Activated CD8-positive, alpha-beta T cell treated with anti-CD3 and anti-CD28 coated beads for 36 hours (primary cell): ENCODE measurements at regions of chr17 and their contacts with region 1.

Region 1: DNA sequence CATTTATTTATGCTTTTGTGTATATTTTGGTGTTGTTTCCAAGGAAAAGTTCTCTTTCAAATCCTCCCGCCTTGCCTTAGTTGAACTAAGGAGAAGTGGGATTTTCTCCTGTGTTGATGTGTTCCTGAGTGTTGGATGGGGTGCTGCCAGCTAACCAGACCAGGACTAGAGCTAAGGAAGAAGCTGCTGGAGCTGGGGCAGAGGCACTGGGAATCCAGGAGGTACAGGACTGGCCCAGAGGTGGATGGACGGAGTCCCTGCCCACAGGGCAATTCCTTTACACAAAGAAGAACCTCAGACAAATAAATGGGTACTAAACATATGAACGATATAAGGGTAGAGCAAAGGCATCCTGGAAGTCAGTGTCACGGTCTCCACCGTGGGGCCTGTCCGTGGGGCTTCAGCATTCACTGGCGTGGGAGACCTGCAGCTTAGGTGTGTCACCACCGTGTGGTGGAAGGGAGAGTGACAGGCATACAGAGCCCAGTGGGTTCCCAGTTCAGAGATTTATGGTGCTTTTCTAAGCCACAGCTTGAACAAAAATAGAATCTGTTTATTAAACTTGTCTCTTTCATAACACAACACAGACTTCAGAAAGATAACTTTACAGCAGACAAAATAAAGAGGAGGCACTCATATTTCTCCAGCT is 270.7 kb downstream of the NTN1 start:
- DNase-seq: peak; percentile 73
- ATAC-seq: peak; percentile 43
- H3K4me3 Mint-ChIP-seq: no peak overlapping the region
- H3K27ac Mint-ChIP-seq: no peak overlapping the region
- H3K4me1 Mint-ChIP-seq: peaks cover 33% of the 10 kb centered on the region
- H3K27me3 Mint-ChIP-seq: no peaks in the 10 kb centered on the region
- CTCF ChIP-seq: peak; percentile 64

Region 2: GRCh38 chr17:9072696-9073339 is 219.2 kb before region 1 on chr17:
- CTCF ChIA-PET with region 1: no interaction called
- POLR2A ChIA-PET with region 1: no interaction called
- intact Hi-C with region 1: no loop called
- DNase-seq: no peak
- ATAC-seq: no peak
- H3K4me3 Mint-ChIP-seq: no peak overlapping the region
- H3K27ac Mint-ChIP-seq: no peak overlapping the region
- H3K4me1 Mint-ChIP-seq: no peaks in the 10 kb centered on the region
- H3K27me3 Mint-ChIP-seq: peaks cover 7% of the 10 kb centered on the region
- CTCF ChIP-seq: no peak

Region 3: GRCh38 chr17:9115446-9116191 is 176.4 kb before region 1 on chr17:
- CTCF ChIA-PET with region 1: interaction called, 26 read pairs
- POLR2A ChIA-PET with region 1: no interaction called
- intact Hi-C with region 1: loop called (anchors 5 kb)
- DNase-seq: peak; percentile 88
- ATAC-seq: peak; percentile 96
- H3K4me3 Mint-ChIP-seq: peak overlapping the region; percentile 68
- H3K27ac Mint-ChIP-seq: peak overlapping the region; percentile 78
- H3K4me1 Mint-ChIP-seq: peaks cover 18% of the 10 kb centered on the region
- H3K27me3 Mint-ChIP-seq: peaks cover 8% of the 10 kb centered on the region
- CTCF ChIP-seq: peak; percentile 49